ENCODE measurements at regions of chr19 and their contacts with region 1.

Region 1: GRCh38 chr19:18152444-18152816 is 533 bp upstream of the PIK3R2 start:
- DNase-seq: peak; percentile 97
- H3K4me3 Mint-ChIP-seq: peak overlapping the region; percentile 88
- H3K27ac Mint-ChIP-seq: peak overlapping the region; percentile 99
- H3K4me1 Mint-ChIP-seq: peaks cover 26% of the 10 kb centered on the region
- H3K27me3 Mint-ChIP-seq: no peaks in the 10 kb centered on the region
- CTCF ChIP-seq: peak; percentile 68

Region 2: GRCh38 chr19:18007044-18007916 is 145.2 kb before region 1 on chr19:
- CTCF ChIA-PET with region 1: interaction called, 3 read pairs
- POLR2A ChIA-PET with region 1: interaction called, 3 read pairs
- intact Hi-C with region 1: loop called (anchors 10 kb)
- DNase-seq: peak; percentile 80
- H3K4me3 Mint-ChIP-seq: peak overlapping the region; percentile 69
- H3K27ac Mint-ChIP-seq: no peak overlapping the region
- H3K4me1 Mint-ChIP-seq: peaks cover 14% of the 10 kb centered on the region
- H3K27me3 Mint-ChIP-seq: no peaks in the 10 kb centered on the region
- CTCF ChIP-seq: peak; percentile 99

Region 3: GRCh38 chr19:18058208-18059030 is 94.0 kb before region 1 on chr19:
- CTCF ChIA-PET with region 1: no interaction called
- POLR2A ChIA-PET with region 1: no interaction called
- intact Hi-C with region 1: no loop called
- DNase-seq: peak; percentile 80
- H3K4me3 Mint-ChIP-seq: no peak overlapping the region
- H3K27ac Mint-ChIP-seq: peak overlapping the region; percentile 57
- H3K4me1 Mint-ChIP-seq: peaks cover 5% of the 10 kb centered on the region
- H3K27me3 Mint-ChIP-seq: no peaks in the 10 kb centered on the region
- CTCF ChIP-seq: peak; percentile 88

Region 4: DNA sequence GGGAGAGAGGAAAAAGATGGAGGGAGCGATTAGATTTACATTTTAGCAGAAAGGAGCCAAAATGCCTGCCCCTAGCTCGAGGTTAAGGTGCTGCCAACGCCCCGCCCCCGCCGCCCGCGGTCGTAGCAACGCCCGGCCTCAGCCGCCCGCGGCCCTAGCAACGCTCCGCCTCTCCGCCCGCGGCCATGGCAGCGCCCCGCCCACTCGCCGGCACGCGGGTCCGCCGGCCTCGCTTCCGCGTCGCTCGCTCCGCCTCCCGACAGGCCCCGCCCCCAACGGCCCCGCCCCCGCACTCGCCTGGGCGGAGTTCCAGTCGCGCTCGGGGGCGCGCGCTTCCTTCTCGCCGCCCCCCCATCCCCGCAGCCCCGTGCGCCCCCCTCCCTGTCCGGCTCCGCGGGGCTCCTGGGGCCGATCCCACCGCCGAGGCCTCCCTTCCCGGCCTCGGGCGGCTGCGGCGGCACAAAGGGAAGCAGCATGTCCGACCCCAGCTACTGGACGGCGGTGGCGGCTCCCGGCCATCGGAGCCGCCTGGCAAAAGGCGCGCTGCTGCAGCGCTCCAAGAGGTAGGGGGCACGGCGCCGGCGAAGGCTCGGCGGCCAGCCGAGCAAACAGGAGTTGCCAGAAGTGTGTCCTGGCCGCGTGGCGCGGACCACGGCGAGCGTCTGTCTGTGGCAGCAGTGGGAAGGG is 34.6 kb before region 1 on chr19:
- CTCF ChIA-PET with region 1: interaction called, 18 read pairs
- POLR2A ChIA-PET with region 1: interaction called, 11 read pairs
- intact Hi-C with region 1: loop called (anchors 1 kb)
- DNase-seq: peak; percentile 70
- H3K4me3 Mint-ChIP-seq: peak overlapping the region; percentile 77
- H3K27ac Mint-ChIP-seq: peak overlapping the region; percentile 63
- H3K4me1 Mint-ChIP-seq: peaks cover 15% of the 10 kb centered on the region
- H3K27me3 Mint-ChIP-seq: no peaks in the 10 kb centered on the region
- CTCF ChIP-seq: no peak

Region 5: DNA sequence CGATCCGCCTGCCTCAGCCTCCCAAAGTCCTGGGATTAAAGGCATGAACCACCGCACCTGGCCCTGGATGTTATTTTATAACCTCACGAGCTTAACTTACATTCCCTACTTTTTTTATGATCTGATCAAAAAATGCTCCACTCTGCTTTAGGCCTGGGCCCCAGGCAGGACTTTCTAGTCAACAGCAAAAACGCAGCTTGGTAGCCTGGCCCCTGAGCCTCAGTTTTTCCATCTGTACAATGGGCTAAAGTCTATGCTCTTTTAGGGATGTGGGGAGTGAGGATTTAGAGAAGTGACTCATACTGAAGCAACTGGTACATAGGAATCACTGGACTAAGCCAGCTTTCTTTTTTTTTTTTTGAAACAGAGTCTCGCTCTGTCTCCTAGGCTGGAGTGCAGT is 11.4 kb before region 1 on chr19:
- CTCF ChIA-PET with region 1: interaction called, 5 read pairs
- POLR2A ChIA-PET with region 1: interaction called, 10 read pairs
- intact Hi-C with region 1: no loop called
- DNase-seq: no peak
- H3K4me3 Mint-ChIP-seq: no peak overlapping the region
- H3K27ac Mint-ChIP-seq: no peak overlapping the region
- H3K4me1 Mint-ChIP-seq: no peaks in the 10 kb centered on the region
- H3K27me3 Mint-ChIP-seq: no peaks in the 10 kb centered on the region
- CTCF ChIP-seq: no peak

Measured in MCF 10A (cell line).